Tibial artery (tissue), 4 donors: ENCODE measurements at regions of chr9 and their contacts with region 1.

Region 1: DNA sequence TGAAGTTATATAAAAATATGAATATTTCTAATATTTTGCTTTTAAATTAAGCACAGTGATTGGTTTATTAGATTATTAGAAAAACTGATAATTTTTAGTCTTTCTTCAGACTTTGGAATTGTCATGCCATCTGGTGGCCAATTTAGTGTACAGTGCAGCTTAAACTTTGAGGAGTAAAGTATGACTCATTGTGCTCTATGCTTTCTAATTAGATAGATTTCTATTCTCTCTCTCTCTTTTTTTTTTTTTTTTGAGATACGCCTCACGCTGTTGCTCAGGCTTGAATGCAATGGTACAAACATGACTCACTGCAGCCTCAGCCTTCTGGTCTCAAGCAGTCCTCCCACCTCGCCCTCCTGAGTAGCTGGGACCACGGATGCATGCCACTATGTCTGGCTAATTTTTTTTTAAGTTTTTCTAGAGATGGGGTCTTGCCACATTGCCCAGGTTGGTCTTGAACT is 42.1 kb upstream of the GPR21 start:
- DNase-seq: no peak
- H3K4me3 ChIP-seq: no peak overlapping the region
- H3K27ac ChIP-seq: peak overlapping the region; percentile 42 to 64
- H3K4me1 ChIP-seq: peaks cover 0 to 16% (median 0%) of the 10 kb centered on the region in 4 donors
- H3K27me3 ChIP-seq: no peaks in the 10 kb centered on the region
- CTCF ChIP-seq: peak; percentile 66 to 71

Region 2: GRCh38 chr9:122904823-122905710 is 86.3 kb before region 1 on chr9 and contains the start of gene RC3H2:
- intact Hi-C with region 1: loop called (anchors 5 kb)
- DNase-seq: peak; percentile 98 to 99
- H3K4me3 ChIP-seq: peak within 1 kb of the TSS; percentile 81 to 94
- H3K27ac ChIP-seq: peak within 1 kb of the TSS; percentile 96 to 97
- H3K4me1 ChIP-seq: peaks cover 0 to 40% (median 13%) of the 10 kb centered on the region in 4 donors
- H3K27me3 ChIP-seq: no peaks in the 10 kb centered on the region
- CTCF ChIP-seq: peak in 1 of 2 experiments; percentile 16

Region 3: GRCh38 chr9:122918310-122918709 is 73.1 kb before region 1 on chr9:
- intact Hi-C with region 1: no loop called
- DNase-seq: no peak
- H3K4me3 ChIP-seq: no peak overlapping the region
- H3K27ac ChIP-seq: no peak overlapping the region
- H3K4me1 ChIP-seq: peaks cover 0 to 6% (median 5%) of the 10 kb centered on the region in 4 donors
- H3K27me3 ChIP-seq: no peaks in the 10 kb centered on the region
- CTCF ChIP-seq: no peak

Region 4: DNA sequence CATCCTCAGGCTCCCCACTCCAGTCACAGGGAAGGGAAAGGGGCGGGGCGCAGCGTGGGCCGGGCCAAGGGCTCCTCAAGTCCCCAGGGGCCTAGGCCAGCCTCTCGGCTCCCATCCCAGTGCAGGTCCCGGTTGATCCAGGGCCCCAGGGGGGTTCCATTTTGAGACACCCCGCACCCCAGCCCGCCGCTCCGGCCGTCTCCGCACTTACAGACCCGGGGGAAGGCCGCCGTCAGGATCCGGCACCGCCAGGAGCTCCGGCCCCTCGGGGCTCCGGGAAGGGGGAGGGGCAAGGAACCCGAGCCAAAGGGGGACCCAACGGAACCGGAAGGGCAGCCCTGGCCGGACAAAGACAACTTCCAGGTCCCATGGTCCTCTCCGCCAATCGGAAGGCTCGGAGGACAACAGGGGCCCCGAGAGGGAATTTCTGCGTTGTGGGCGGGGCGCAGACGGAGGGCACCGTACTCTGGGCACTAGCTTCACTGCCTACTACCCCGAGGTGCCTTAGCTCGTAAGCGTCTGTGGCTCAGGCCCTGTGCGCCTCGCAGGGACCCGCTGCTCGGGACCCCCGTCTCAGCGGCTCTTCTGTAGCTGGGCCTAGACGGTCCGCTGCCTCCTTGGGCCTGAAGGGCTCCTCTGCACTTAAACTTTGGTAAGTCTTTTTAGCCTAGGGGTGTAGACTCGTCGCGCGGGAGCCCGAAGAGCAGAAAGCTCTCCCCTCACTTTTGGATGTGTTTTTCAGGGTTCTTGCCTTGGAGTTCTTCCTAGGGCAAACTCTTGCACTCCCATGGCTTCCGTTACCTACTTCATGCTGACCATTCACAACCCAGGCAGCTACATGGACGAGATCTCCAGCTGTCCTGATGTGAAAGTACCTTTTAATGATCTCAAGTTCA is 59.9 kb before region 1 on chr9 and contains the start of gene ZBTB26:
- intact Hi-C with region 1: loop called (anchors 10 kb)
- DNase-seq: peak; percentile 96 to 97
- H3K4me3 ChIP-seq: peak within 1 kb of the TSS; percentile 82 to 92
- H3K27ac ChIP-seq: peak within 1 kb of the TSS; percentile 82 to 86
- H3K4me1 ChIP-seq: peaks cover 0 to 31% (median 25%) of the 10 kb centered on the region in 4 donors
- H3K27me3 ChIP-seq: no peaks in the 10 kb centered on the region
- CTCF ChIP-seq: no peak

Region 5: DNA sequence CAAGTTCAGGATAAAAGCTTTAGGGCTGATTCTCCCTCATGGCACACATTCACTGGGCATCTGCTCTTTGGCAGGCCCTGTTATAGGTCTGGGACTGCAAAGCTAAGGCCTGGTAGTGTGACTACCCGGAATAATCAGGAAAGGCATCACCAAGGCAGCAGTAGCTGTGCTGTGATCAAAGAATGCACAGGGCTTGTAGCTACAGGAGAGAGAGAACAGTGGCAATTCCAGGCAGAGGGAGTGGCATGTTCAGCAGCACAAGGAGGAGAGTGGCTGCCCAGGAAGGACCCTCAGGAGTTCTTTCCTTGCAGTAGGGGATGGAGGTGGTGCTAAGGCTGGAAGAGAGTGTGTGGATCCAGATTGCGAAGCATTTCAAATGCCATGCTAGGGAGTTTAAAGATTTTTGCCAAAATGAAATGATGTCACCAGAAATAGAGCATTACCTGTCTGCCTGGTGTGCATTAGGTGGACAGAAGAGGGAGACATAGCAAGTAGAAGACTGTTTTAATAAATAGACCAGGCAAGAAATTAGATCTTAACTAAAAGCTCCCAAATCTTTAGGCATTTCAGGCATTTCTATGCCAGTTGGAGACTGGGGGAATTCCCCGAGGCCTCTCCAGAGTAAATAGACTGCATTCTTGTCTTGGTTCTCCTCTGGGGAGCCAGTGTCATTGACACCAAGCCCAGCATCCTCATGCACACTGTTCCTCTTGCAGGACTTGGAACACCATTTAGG is 111.1 kb after region 1 on chr9:
- intact Hi-C with region 1: no loop called
- DNase-seq: no peak
- H3K4me3 ChIP-seq: no peak overlapping the region
- H3K27ac ChIP-seq: no peak overlapping the region
- H3K4me1 ChIP-seq: peaks cover 0 to 4% (median 0%) of the 10 kb centered on the region in 4 donors
- H3K27me3 ChIP-seq: no peaks in the 10 kb centered on the region
- CTCF ChIP-seq: no peak